CD4-positive, alpha-beta memory T cell (primary cell): ENCODE measurements at regions of chr14 and their contacts with region 1.

Region 1: DNA sequence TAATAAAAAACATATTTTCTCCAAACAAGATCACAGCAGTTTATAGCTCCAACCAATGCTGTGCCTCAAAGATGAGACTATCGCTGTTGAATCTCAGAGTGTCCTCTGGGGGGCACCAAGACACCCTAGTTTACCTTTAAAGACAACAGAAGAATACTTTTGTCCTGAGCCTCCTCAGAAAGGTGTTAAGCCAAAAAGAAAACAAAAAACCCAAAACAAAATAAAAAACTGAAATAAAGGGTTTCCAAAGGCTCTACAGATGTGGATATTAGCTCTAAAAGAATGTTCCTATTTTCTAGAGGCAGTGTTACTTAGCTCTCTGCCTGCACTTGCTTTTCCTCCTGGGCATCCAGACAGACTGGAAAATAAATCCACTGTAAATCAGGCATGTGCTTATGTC is 86.9 kb upstream of the TTC7B start:
- DNase-seq: peak; percentile 58 to 63 (median 61)
- H3K4me3 ChIP-seq: no peak overlapping the region
- H3K4me3 Mint-ChIP-seq: no peak overlapping the region
- H3K27ac ChIP-seq: no peak overlapping the region
- H3K27ac Mint-ChIP-seq: peak overlapping the region in 1 of 7 donors; percentile 6
- H3K4me1 ChIP-seq: no peaks in the 10 kb centered on the region
- H3K4me1 Mint-ChIP-seq: peaks cover 0 to 9% (median 3%) of the 10 kb centered on the region in 4 donors
- H3K27me3 ChIP-seq: no peaks in the 10 kb centered on the region
- H3K27me3 Mint-ChIP-seq: no peaks in the 10 kb centered on the region

Region 2: DNA sequence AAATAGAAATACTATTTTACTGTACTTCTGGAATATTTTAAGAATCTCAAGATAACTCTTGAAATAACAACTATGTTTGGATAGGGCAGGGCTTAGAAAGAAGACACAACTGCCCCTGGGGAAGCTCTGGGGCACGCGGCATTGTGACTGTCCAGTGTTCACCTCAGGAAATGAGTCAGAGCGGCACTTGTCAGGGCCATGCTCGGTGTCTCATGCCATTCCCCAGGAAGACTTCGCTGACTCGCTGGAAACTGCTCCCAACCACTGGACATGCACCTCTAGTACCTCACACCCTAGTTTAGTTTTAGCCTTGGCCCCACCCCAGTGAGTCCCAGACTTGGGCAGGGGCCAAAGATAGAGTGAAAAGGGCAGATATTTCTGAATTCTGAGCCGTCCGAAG is 278.9 kb before region 1 on chr14:
- CTCF ChIA-PET with region 1: no interaction called
- POLR2A ChIA-PET with region 1: no interaction called
- intact Hi-C with region 1: no loop called
- DNase-seq: no peak
- H3K4me3 ChIP-seq: no peak overlapping the region
- H3K4me3 Mint-ChIP-seq: no peak overlapping the region
- H3K27ac ChIP-seq: no peak overlapping the region
- H3K27ac Mint-ChIP-seq: no peak overlapping the region
- H3K4me1 ChIP-seq: no peaks in the 10 kb centered on the region
- H3K4me1 Mint-ChIP-seq: no peaks in the 10 kb centered on the region
- H3K27me3 ChIP-seq: no peaks in the 10 kb centered on the region
- H3K27me3 Mint-ChIP-seq: no peaks in the 10 kb centered on the region

Region 3: GRCh38 chr14:90850487-90850886 is 52.6 kb before region 1 on chr14:
- CTCF ChIA-PET with region 1: no interaction called
- POLR2A ChIA-PET with region 1: no interaction called
- intact Hi-C with region 1: no loop called
- DNase-seq: no peak
- H3K4me3 ChIP-seq: no peak overlapping the region
- H3K4me3 Mint-ChIP-seq: no peak overlapping the region
- H3K27ac ChIP-seq: no peak overlapping the region
- H3K27ac Mint-ChIP-seq: no peak overlapping the region
- H3K4me1 ChIP-seq: no peaks in the 10 kb centered on the region
- H3K4me1 Mint-ChIP-seq: peaks cover 0 to 3% (median 0%) of the 10 kb centered on the region in 4 donors
- H3K27me3 ChIP-seq: no peaks in the 10 kb centered on the region
- H3K27me3 Mint-ChIP-seq: no peaks in the 10 kb centered on the region

Region 4: DNA sequence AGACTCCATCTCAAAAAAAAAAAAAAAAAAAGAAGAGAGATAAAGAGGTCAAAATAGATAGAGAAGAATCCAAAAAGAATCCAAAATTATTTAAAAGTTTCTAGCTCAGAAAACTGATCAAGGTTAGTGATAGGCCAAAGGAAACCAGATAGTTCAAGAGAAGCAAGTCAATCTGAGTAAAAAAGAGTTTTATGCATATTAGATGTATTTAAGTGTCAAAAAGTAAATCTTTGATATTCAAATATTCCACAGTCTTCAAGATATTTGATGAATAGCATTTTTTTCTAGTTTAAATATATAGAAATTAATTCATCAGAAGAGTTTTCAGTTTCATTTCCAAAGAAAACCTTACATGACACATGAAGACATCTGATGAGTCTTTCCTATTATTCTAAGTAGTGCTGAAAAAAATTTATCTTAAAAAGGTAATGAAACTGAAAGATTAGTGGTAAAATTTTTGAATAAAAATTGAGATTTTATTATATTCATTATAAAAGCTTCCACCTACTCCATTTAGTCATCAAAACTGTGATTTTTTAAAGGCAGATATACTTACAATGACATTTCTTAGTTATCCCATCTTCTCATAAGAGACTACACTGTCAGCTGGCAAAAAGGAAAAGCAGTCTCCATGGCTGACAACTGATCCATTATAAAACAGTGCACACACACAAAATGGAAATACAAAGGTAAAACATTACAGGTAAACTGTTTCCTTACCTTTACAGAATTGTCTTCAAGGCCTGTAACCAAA is 88.8 kb after region 1 on chr14:
- CTCF ChIA-PET with region 1: no interaction called
- POLR2A ChIA-PET with region 1: no interaction called
- intact Hi-C with region 1: no loop called
- DNase-seq: no peak
- H3K4me3 ChIP-seq: no peak overlapping the region
- H3K4me3 Mint-ChIP-seq: no peak overlapping the region
- H3K27ac ChIP-seq: no peak overlapping the region
- H3K27ac Mint-ChIP-seq: no peak overlapping the region
- H3K4me1 ChIP-seq: no peaks in the 10 kb centered on the region
- H3K4me1 Mint-ChIP-seq: peaks cover 11 to 19% (median 11%) of the 10 kb centered on the region in 4 donors
- H3K27me3 ChIP-seq: no peaks in the 10 kb centered on the region
- H3K27me3 Mint-ChIP-seq: no peaks in the 10 kb centered on the region

Region 5: DNA sequence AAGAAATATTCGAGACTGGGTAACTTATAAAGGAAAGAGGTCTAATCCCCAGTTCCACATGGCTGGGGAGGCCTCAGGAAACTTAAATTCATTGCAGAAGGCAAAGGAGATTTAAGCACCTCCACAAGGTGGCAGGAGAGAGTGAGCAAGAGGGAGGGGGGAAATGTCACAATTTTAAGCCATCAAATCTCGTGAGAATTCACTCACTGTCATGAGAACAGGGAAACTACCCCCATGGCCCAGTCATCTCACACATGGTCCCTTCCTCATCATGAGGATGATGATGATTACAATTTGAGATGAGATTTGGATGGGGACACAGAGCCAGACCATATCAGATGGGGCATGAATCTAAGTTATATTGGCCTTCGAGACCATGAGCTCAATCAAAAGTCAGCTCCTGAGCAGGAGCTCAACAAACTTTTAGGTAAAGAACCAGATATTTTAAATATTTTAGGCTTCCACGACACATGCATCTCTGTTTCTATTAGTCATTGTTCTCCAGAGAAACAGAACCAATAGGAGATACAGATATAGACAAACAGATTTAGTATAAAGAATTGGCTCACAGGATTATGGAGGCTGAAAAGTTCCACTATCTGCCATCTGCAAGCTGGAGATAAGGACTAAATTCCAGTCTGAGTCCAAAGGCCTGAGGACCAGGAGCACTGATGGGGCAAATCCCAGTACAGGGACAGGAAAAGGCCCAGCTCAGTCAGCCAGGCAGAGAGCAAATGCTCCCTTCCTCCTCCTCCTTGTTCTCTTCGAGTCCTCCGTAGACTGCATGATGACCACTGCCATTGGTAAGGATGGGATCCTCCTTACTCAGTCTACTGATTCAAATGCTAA is 235.6 kb after region 1 on chr14:
- CTCF ChIA-PET with region 1: interaction called, 12 read pairs
- POLR2A ChIA-PET with region 1: no interaction called
- intact Hi-C with region 1: loop called (anchors 1 kb)
- DNase-seq: peak; percentile 40 to 53 (median 48)
- H3K4me3 ChIP-seq: no peak overlapping the region
- H3K4me3 Mint-ChIP-seq: no peak overlapping the region
- H3K27ac ChIP-seq: no peak overlapping the region
- H3K27ac Mint-ChIP-seq: peak overlapping the region in 4 of 7 donors; percentile 13 to 64 (median 60)
- H3K4me1 ChIP-seq: peaks cover 20% of the 10 kb centered on the region
- H3K4me1 Mint-ChIP-seq: peaks cover 23 to 45% (median 37%) of the 10 kb centered on the region in 4 donors
- H3K27me3 ChIP-seq: no peaks in the 10 kb centered on the region
- H3K27me3 Mint-ChIP-seq: no peaks in the 10 kb centered on the region

Region 6: DNA sequence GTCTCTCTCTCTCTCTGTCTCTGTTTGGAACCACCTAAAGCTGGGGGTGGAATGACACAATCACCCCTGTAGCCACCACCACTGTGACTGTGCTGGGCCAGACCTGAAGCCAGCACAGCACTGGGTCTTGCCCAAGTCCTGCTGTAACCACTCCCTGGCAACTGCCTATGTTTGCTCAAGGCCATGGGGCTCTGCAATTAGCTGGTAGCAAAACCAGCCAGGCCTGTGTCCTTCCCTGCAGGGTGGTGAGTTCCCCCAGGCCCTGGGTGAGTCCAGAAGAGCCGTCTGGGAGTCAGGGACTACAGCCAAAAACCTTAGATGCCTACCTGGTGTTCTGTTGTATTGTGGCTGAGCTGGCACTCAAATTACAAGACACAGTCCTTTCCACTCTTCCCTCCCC is 261.6 kb after region 1 on chr14:
- CTCF ChIA-PET with region 1: interaction called, 246 read pairs
- POLR2A ChIA-PET with region 1: no interaction called
- intact Hi-C with region 1: no loop called
- DNase-seq: no peak
- H3K4me3 ChIP-seq: no peak overlapping the region
- H3K4me3 Mint-ChIP-seq: no peak overlapping the region
- H3K27ac ChIP-seq: no peak overlapping the region
- H3K27ac Mint-ChIP-seq: peak overlapping the region in 3 of 7 donors; percentile 42 to 73 (median 47)
- H3K4me1 ChIP-seq: no peaks in the 10 kb centered on the region
- H3K4me1 Mint-ChIP-seq: peaks cover 0 to 1% (median 0%) of the 10 kb centered on the region in 4 donors
- H3K27me3 ChIP-seq: no peaks in the 10 kb centered on the region
- H3K27me3 Mint-ChIP-seq: no peaks in the 10 kb centered on the region